CD8-positive, alpha-beta T cell (primary cell): ENCODE measurements at regions of chr5 and their contacts with region 1.

Region 1: DNA sequence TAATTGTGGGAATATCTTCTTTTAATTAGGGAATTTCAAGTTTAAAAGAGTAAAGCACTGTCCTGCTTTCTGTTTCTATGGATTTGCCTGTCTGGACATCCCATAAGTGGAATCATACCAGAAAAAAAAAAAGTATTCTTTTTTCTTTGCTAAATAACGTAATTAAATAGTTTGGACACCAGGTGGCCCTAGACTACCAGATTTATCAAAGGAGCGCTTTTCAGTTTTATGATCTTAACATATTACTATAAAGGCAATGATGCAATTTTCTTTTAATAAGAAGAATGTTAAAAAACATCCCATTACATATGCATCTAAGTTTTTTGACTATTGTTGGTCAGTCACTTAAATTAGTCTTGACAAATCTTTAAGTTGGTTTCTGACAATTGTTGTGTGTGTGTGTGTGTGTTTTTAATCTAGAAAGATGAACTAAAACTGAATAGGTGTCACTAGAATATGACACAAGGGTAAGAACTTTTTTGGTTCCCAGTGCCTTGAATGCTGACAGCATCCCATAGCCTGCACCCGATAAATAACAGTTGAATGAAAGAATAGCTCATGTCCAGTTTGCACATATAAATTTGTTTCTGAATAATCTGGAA is 49.5 kb downstream of the C5orf22 start:
- DNase-seq: peak in 2 of 9 experiments; percentile 49 to 52
- ATAC-seq: no peak
- H3K4me3 ChIP-seq: no peak overlapping the region
- H3K4me3 Mint-ChIP-seq: no peak overlapping the region
- H3K27ac ChIP-seq: no peak overlapping the region
- H3K27ac Mint-ChIP-seq: no peak overlapping the region
- H3K4me1 ChIP-seq: no peaks in the 10 kb centered on the region
- H3K4me1 Mint-ChIP-seq: no peaks in the 10 kb centered on the region
- H3K27me3 ChIP-seq: no peaks in the 10 kb centered on the region
- H3K27me3 Mint-ChIP-seq: peaks cover 16% of the 10 kb centered on the region
- CTCF ChIP-seq: peak; percentile 58

Region 2: GRCh38 chr5:31459594-31459993 is 122.0 kb before region 1 on chr5:
- CTCF ChIA-PET with region 1: no interaction called
- POLR2A ChIA-PET with region 1: no interaction called
- intact Hi-C with region 1: no loop called
- DNase-seq: no peak
- ATAC-seq: no peak
- H3K4me3 ChIP-seq: no peak overlapping the region
- H3K4me3 Mint-ChIP-seq: no peak overlapping the region
- H3K27ac ChIP-seq: no peak overlapping the region
- H3K27ac Mint-ChIP-seq: no peak overlapping the region
- H3K4me1 ChIP-seq: no peaks in the 10 kb centered on the region
- H3K4me1 Mint-ChIP-seq: no peaks in the 10 kb centered on the region
- H3K27me3 ChIP-seq: no peaks in the 10 kb centered on the region
- H3K27me3 Mint-ChIP-seq: no peaks in the 10 kb centered on the region
- CTCF ChIP-seq: no peak

Region 3: DNA sequence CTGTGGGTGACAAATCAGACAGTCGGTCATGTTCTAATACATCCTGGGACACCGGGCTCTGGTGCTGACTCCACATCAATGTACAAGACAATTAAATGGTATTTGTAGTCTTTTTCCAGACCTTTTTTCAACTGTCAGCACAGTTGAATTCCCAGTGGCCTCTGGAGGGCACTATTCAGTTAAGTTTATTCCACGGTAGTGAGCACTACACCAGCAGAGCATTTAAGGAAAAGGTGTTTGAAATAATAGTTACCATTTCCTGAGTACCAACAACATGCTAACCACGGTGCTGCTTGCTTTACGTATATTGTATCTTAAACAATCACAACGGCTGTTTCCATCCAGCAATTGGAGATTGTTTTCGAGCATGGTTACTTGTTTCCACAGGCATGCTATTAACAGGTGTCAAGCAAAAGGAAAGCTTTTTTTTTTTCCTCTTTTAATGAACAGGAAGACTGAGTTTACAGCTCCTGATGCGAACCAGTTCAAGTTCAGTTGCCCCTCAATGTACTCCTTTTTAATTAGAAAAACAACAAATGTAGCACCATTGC is 244.0 kb after region 1 on chr5:
- CTCF ChIA-PET with region 1: interaction called, 3 read pairs
- POLR2A ChIA-PET with region 1: no interaction called
- intact Hi-C with region 1: loop called in 1 of 2 experiments (anchors 10 kb)
- DNase-seq: peak in 6 of 9 experiments; percentile 35 to 69 (median 45)
- ATAC-seq: peak; percentile 70
- H3K4me3 ChIP-seq: no peak overlapping the region
- H3K4me3 Mint-ChIP-seq: peak overlapping the region; percentile 58
- H3K27ac ChIP-seq: no peak overlapping the region
- H3K27ac Mint-ChIP-seq: no peak overlapping the region
- H3K4me1 ChIP-seq: no peaks in the 10 kb centered on the region
- H3K4me1 Mint-ChIP-seq: peaks cover 7% of the 10 kb centered on the region
- H3K27me3 ChIP-seq: no peaks in the 10 kb centered on the region
- H3K27me3 Mint-ChIP-seq: peaks cover 11% of the 10 kb centered on the region
- CTCF ChIP-seq: peak; percentile 54

Region 4: GRCh38 chr5:31962871-31963307 is 381.3 kb after region 1 on chr5:
- CTCF ChIA-PET with region 1: no interaction called
- POLR2A ChIA-PET with region 1: no interaction called
- intact Hi-C with region 1: no loop called
- DNase-seq: no peak
- ATAC-seq: no peak
- H3K4me3 ChIP-seq: no peak overlapping the region
- H3K4me3 Mint-ChIP-seq: no peak overlapping the region
- H3K27ac ChIP-seq: no peak overlapping the region
- H3K27ac Mint-ChIP-seq: no peak overlapping the region
- H3K4me1 ChIP-seq: no peaks in the 10 kb centered on the region
- H3K4me1 Mint-ChIP-seq: no peaks in the 10 kb centered on the region
- H3K27me3 ChIP-seq: peaks cover 0 to 3% of the 10 kb centered on the region in 2 experiments
- H3K27me3 Mint-ChIP-seq: peaks cover 2% of the 10 kb centered on the region
- CTCF ChIP-seq: no peak

Region 5: DNA sequence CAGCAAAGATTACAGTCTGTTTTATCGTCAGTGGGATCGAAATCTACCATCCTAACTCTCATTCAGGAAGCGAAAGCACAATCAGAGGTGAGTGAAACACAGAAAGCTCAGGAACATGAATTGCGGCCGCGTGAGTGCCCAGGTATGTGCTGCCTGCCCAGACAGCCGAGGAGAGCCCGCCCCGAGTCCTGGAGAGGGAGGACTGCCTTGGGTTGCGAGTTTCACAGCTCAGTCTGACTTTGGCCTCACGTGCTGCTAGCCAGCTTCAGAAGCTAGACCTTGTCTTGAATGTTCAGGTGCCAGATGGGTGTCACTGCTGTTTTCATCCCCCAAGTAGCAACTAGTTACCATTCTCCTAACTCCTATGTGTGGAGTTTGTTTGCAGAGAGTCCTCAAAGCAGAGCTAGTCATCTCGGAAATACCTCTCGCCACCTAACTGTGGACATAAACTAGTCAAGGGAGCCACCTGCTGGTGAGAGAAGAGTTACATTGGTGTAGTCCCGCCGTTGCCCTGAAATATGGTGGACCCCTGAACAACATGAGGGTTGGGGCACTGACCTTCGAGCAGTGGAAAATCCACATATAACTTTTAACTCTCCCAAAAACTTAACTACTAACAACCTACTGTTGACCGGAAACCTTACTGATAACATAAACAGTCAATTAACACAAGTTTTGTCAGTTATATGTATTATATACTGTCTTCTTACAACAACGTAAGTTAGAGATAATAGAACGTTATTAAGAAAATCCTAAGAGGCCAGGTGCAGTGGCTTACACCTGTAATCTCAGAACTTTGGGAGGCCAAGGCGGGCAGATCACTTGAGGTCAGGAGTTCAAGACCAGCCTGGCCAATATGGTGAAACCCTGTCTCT is 511.6 kb after region 1 on chr5:
- CTCF ChIA-PET with region 1: interaction called, 11 read pairs
- POLR2A ChIA-PET with region 1: no interaction called
- intact Hi-C with region 1: loop called (anchors 1 kb)
- DNase-seq: peak; percentile 25 to 77 (median 65)
- ATAC-seq: peak; percentile 87
- H3K4me3 ChIP-seq: no peak overlapping the region
- H3K4me3 Mint-ChIP-seq: no peak overlapping the region
- H3K27ac ChIP-seq: no peak overlapping the region
- H3K27ac Mint-ChIP-seq: no peak overlapping the region
- H3K4me1 ChIP-seq: no peaks in the 10 kb centered on the region
- H3K4me1 Mint-ChIP-seq: peaks cover 6% of the 10 kb centered on the region
- H3K27me3 ChIP-seq: no peaks in the 10 kb centered on the region
- H3K27me3 Mint-ChIP-seq: no peaks in the 10 kb centered on the region
- CTCF ChIP-seq: peak; percentile 68

Region 6: GRCh38 chr5:32613050-32613672 is 1031.6 kb after region 1 on chr5:
- CTCF ChIA-PET with region 1: no interaction called
- POLR2A ChIA-PET with region 1: no interaction called
- intact Hi-C with region 1: loop called (anchors 2 to 10 kb)
- DNase-seq: peak; percentile 68 to 89 (median 82)
- ATAC-seq: peak; percentile 92
- H3K4me3 ChIP-seq: no peak overlapping the region
- H3K4me3 Mint-ChIP-seq: no peak overlapping the region
- H3K27ac ChIP-seq: no peak overlapping the region
- H3K27ac Mint-ChIP-seq: no peak overlapping the region
- H3K4me1 ChIP-seq: no peaks in the 10 kb centered on the region
- H3K4me1 Mint-ChIP-seq: peaks cover 9% of the 10 kb centered on the region
- H3K27me3 ChIP-seq: no peaks in the 10 kb centered on the region
- H3K27me3 Mint-ChIP-seq: no peaks in the 10 kb centered on the region
- CTCF ChIP-seq: peak; percentile 94